Naive thymus-derived CD8-positive, alpha-beta T cell (primary cell): ENCODE measurements at regions of chr2 and their contacts with region 1.

Region 1: DNA sequence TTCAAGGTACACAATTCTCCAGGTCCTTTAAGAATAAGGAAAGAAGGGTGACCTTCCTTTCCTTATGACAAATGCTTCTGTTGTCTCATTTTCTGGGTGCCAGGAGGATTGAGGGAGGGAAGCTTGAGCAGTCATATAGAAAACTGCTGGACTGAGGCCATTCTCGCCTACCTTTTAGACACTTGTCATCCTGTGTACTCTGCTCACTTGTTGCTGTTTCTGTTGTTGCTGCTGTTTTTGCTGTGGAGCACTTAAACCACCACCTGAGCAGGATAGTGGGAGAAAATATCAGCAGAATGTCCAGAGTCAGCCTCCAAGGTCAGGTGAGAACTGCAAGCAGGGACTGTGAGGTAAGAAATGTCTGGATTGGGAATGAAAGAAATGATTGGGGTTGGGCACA is 2.8 kb downstream of the DNAJC5G start:
- DNase-seq: no peak
- ATAC-seq: no peak
- H3K4me3 Mint-ChIP-seq: no peak overlapping the region
- H3K27ac Mint-ChIP-seq: no peak overlapping the region
- H3K4me1 Mint-ChIP-seq: peaks cover 0 to 4% (median 2%) of the 10 kb centered on the region in 4 donors
- H3K27me3 Mint-ChIP-seq: peaks cover 11 to 34% (median 16%) of the 10 kb centered on the region in 5 donors

Region 2: GRCh38 chr2:27264753-27265535 is 13.1 kb before region 1 on chr2:
- POLR2A ChIA-PET with region 1: interaction called, 11 read pairs
- DNase-seq: peak; percentile 49 to 80 (median 62)
- ATAC-seq: peak; percentile 78 to 82
- H3K4me3 Mint-ChIP-seq: peak overlapping the region in 9 of 10 donors; percentile 79 to 99 (median 83)
- H3K27ac Mint-ChIP-seq: peak overlapping the region in 3 of 10 donors; percentile 34 to 91 (median 44)
- H3K4me1 Mint-ChIP-seq: peaks cover 22 to 30% (median 28%) of the 10 kb centered on the region in 4 donors
- H3K27me3 Mint-ChIP-seq: peaks cover 29 to 40% (median 36%) of the 10 kb centered on the region in 5 donors

Region 3: GRCh38 chr2:27638037-27638637 is 360.1 kb after region 1 on chr2:
- POLR2A ChIA-PET with region 1: no interaction called
- DNase-seq: peak in 2 of 10 donors; percentile 2 to 12
- ATAC-seq: peak; percentile 33 to 44
- H3K4me3 Mint-ChIP-seq: peak overlapping the region in 1 of 10 donors; percentile 49
- H3K27ac Mint-ChIP-seq: peak overlapping the region in 8 of 10 donors; percentile 34 to 82 (median 66)
- H3K4me1 Mint-ChIP-seq: peaks cover 0 to 14% (median 8%) of the 10 kb centered on the region in 4 donors
- H3K27me3 Mint-ChIP-seq: no peaks in the 10 kb centered on the region